ENCODE measurements at regions of chr16 and their contacts with region 1.

Region 1: GRCh38 chr16:56608043-56608875 is at the start of gene MT2A:
- DNase-seq: peak; percentile 89
- H3K4me3 Mint-ChIP-seq: peak within 1 kb of the TSS; percentile 97
- H3K27ac Mint-ChIP-seq: peak within 1 kb of the TSS; percentile 98
- H3K4me1 Mint-ChIP-seq: peaks cover 58% of the 10 kb centered on the region
- H3K27me3 Mint-ChIP-seq: no peaks in the 10 kb centered on the region
- total RNA-seq, gene MT2A: 348 and 365 TPM in 2 replicates

Region 2: DNA sequence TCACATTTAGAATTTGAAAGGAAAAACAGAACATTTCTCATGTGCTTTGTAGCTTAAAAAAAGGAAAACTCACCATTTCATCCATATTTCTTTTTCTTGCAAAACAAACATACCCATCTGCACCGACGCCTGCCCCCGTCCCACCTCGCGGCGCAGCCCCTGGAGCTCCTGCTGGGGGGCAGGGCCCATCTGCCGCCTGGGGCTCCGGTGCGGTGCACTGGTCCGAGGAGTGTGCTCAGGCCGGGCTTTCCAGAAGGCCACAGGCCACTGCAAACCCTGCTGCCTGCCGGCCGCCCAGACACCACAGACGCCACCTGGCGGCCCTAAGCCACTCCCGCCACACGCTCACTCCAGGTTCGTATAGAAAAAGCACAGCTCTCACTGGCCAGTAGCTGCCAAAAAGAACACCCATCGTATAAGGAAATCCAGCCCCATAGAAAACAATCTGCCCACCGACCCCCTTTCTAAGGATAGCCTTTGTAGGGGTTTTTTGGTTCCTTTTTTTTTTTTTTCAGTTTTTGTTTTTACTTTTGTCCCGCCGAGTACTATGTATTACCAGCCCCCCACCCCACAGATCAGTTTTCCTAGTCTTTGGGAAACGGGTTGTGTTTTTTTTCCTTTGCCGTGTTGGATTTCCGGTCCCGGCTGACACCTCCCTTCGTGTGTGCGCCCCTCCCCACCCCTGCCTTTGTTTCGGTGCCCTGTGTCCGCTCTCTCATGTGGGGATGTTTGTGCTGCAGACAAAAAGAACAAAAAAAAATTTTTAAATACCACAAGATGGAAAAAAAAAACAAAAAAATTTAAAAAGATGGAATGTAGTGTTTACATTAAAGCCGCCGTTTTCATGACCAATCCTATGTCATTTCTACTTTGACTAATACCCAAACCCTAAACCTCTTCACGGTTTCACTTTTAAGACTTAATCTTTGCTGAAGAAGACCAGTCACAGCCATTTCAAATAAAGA is 251.7 kb before region 1 on chr16:
- intact Hi-C with region 1: loop called (anchors 1 kb)
- DNase-seq: peak; percentile 46
- H3K4me3 Mint-ChIP-seq: peak overlapping the region; percentile 71
- H3K27ac Mint-ChIP-seq: peak overlapping the region; percentile 88
- H3K4me1 Mint-ChIP-seq: peaks cover 38% of the 10 kb centered on the region
- H3K27me3 Mint-ChIP-seq: peaks cover 2% of the 10 kb centered on the region

Region 3: GRCh38 chr16:56625140-56625942 is 17.1 kb after region 1 on chr16 and contains the start of gene MT1E:
- intact Hi-C with region 1: loop called (anchors 1 kb)
- DNase-seq: peak; percentile 71
- H3K4me3 Mint-ChIP-seq: peak within 1 kb of the TSS; percentile 92
- H3K27ac Mint-ChIP-seq: peak within 1 kb of the TSS; percentile 93
- H3K4me1 Mint-ChIP-seq: peaks cover 23% of the 10 kb centered on the region
- H3K27me3 Mint-ChIP-seq: peaks cover 6% of the 10 kb centered on the region
- total RNA-seq, gene MT1E: 135 TPM in 2 replicates

Region 4: DNA sequence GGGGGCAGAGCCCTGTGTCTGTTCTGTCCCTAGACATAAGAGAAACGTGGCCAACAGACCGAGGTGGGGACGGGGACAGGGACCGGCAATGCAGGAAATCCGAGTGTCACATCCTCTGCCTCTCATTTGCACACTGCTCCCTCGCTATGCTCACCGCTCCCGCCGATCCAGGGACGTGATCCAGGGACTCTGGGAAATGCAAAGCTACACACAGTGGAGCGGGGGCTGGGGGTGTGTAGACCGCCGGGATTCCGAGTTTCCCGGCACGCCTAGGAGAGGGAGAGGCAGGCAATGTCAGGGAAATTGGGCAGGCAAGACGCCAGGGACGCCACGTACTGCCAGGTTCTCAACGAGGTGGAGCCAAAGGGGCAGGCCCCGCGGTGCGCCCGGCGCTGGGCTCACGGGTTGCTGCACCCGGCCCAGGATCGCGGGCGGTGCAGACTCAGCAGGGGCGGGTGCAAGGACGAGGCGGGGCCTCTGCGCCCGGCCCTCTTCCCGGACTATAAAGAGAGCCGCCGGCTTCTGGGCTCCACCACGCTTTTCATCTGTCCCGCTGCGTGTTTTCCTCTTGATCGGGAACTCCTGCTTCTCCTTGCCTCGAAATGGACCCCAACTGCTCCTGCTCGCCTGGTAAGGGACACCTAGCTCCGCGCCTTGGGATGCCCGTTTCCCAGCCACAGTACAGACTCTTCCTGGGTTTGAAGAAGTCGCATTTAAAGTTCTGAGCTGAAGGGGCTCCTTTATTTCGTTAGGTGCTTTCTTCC is 73.9 kb after region 1 on chr16 and contains the start of gene MT1X:
- intact Hi-C with region 1: loop called (anchors 1 kb)
- DNase-seq: peak; percentile 86
- H3K4me3 Mint-ChIP-seq: peak within 1 kb of the TSS; percentile 94
- H3K27ac Mint-ChIP-seq: peak within 1 kb of the TSS; percentile 90
- H3K4me1 Mint-ChIP-seq: peaks cover 32% of the 10 kb centered on the region
- H3K27me3 Mint-ChIP-seq: no peaks in the 10 kb centered on the region
- total RNA-seq, gene MT1X: 60.7 and 70.4 TPM in 2 replicates

Region 5: GRCh38 chr16:56931892-56932720 is 323.8 kb after region 1 on chr16 and contains the start of gene HERPUD1:
- intact Hi-C with region 1: loop called (anchors 5 kb)
- DNase-seq: peak; percentile 99
- H3K4me3 Mint-ChIP-seq: peak within 1 kb of the TSS; percentile 95
- H3K27ac Mint-ChIP-seq: peak within 1 kb of the TSS; percentile 94
- H3K4me1 Mint-ChIP-seq: peaks cover 41% of the 10 kb centered on the region
- H3K27me3 Mint-ChIP-seq: no peaks in the 10 kb centered on the region
- total RNA-seq, gene HERPUD1: 176 and 178 TPM in 2 replicates

Region 6: DNA sequence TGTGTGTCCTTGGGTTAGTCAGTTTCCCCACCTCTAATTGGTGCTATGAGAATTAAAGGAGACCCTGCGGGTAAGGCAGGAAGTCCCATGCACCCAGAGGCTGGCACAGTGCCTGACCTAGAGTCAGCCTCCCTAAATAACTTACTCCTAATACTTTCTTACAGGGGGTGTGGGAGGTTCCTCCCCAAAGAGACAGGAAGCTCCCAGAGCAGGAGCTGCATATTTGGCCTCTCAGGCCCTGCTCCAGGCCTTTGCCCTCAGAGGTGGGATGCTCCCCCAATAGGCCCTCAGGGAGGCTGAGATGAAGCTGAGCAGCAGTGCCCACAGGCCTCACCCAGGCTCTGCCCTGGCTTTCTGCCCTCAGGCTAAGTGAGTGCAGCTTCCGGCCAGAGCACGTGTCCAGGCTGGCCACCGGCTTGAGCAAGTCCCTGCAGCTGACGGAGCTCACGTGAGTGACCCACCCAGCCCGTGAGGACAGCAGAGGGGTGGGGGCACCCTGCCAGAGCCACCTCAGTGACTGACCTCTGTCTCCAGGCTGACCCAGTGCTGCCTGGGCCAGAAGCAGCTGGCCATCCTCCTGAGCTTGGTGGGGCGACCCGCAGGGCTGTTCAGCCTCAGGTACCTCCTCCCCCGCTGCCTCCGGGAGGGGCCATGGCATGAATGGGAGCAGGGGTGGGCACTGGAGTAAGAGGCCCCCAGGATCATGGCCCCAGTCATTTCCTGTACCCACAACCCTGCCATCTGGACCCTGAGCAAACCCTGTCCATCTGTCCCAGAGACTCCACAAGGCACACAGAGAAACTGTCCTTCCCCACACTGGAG is 453.0 kb after region 1 on chr16:
- intact Hi-C with region 1: no loop called
- DNase-seq: no peak
- H3K4me3 Mint-ChIP-seq: no peak overlapping the region
- H3K27ac Mint-ChIP-seq: peak overlapping the region; percentile 61
- H3K4me1 Mint-ChIP-seq: no peaks in the 10 kb centered on the region
- H3K27me3 Mint-ChIP-seq: no peaks in the 10 kb centered on the region

Region 7: DNA sequence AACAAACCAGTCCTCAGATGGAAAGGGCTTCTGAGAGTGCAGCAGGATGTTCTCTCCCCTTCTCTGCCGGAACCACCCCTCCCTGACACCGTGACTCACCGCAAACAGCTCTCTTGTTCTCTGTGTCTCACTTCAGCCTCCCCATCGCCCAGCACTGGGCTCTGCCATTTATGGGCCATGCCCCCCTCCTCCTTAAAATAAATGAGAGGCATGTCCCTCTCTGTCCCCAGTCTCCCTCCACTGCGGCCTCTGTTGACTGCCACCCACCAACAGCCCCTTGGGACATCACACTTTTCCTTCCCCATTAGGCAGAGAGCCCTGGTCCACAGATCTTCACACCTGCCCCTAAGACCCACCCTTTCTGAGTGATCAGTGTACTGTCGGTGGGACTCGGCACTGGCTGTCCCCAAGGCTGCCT is 921.9 kb after region 1 on chr16:
- intact Hi-C with region 1: loop called (anchors 5 kb)
- DNase-seq: peak; percentile 64
- H3K4me3 Mint-ChIP-seq: peak overlapping the region; percentile 76
- H3K27ac Mint-ChIP-seq: peak overlapping the region; percentile 97
- H3K4me1 Mint-ChIP-seq: peaks cover 51% of the 10 kb centered on the region
- H3K27me3 Mint-ChIP-seq: no peaks in the 10 kb centered on the region

Measured in activated T-helper 1 cell treated with anti-CD3 and anti-CD28 coated beads, Interleukin-12 subunit alpha, Interleukin-12 subunit beta, Interleukin-2, Interleukin-4 antibody, amounts not matched to agents 30 ng/mL and 10 ng/mL and 1 ng/mL, durations not matched to agents 14 hours and 24 hours and 36 hours (primary cell).